ENCODE measurements at regions of chr17 and their contacts with region 1.

Region 1: DNA sequence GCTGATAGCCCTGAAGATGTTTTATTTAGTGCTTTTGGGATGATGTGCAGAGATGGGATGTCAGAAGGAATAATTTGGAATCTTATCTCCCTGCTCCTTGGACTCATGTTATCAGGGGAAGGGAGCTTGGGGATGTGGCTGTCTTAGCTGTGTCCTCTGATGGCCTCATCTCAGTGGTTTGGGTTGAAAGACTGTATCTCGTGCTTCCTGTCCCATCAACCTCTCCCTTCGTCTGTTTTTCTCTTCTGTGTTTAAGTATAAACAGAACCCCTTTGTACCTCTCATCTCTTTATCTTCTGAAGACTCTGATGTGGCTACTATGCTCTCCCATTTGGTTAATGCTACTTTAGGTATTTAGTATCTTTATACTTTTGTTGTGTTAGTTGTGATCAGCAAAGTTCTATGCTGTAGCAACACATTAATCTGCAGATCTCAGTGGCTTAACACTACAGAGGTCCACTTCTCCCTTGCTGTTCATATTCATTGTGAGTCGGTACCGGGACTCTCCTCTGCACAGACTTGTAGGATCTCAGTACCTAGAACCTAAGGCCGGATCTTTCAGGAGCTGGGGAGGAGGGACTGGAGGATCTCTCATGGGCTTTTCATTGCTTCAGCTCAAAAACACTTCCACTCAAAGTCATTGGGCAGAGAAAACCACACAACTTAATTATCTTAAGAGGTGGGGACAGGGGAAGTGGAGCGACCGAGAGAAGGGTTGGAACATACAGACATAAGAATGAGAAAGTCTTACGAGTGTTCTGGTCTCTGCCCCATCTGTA is 28.8 kb downstream of the PRKCA start:
- DNase-seq: no peak
- ATAC-seq: 0 out of 2 replicates have a peak, but pooled peaks have one; percentile 17
- H3K4me3 ChIP-seq: no peak overlapping the region
- H3K27ac ChIP-seq: 0 out of 2 replicates have a peak overlapping the region, but pooled peaks have one; percentile 23
- H3K4me1 ChIP-seq: peaks cover 4% of the 10 kb centered on the region
- H3K27me3 ChIP-seq: no peaks in the 10 kb centered on the region
- CTCF ChIP-seq: no peak

Region 2: GRCh38 chr17:66317629-66318028 is 13.6 kb before region 1 on chr17:
- CTCF ChIA-PET with region 1: no interaction called
- POLR2A ChIA-PET with region 1: no interaction called
- in situ Hi-C with region 1: no loop called
- intact Hi-C with region 1: no loop called
- DNase-seq: no peak
- ATAC-seq: no peak
- H3K4me3 ChIP-seq: no peak overlapping the region
- H3K27ac ChIP-seq: no peak overlapping the region; the same call in 1 of the 2 replicates
- H3K4me1 ChIP-seq: no peaks in the 10 kb centered on the region; the same call in 1 of the 2 replicates
- H3K27me3 ChIP-seq: no peaks in the 10 kb centered on the region
- CTCF ChIP-seq: no peak

Region 3: GRCh38 chr17:66364990-66365490 is 33.8 kb after region 1 on chr17:
- CTCF ChIA-PET with region 1: no interaction called
- POLR2A ChIA-PET with region 1: no interaction called
- in situ Hi-C with region 1: no loop called
- intact Hi-C with region 1: no loop called
- DNase-seq: no peak
- ATAC-seq: no peak
- H3K4me3 ChIP-seq: no peak overlapping the region
- H3K27ac ChIP-seq: peak overlapping the region; percentile 57; the same call in 1 of the 2 replicates
- H3K4me1 ChIP-seq: peaks cover 40% of the 10 kb centered on the region
- H3K27me3 ChIP-seq: no peaks in the 10 kb centered on the region
- CTCF ChIP-seq: no peak

Region 4: GRCh38 chr17:66934009-66934408 is 602.8 kb after region 1 on chr17:
- CTCF ChIA-PET with region 1: interaction called, 11 read pairs
- POLR2A ChIA-PET with region 1: no interaction called
- in situ Hi-C with region 1: no loop called
- intact Hi-C with region 1: no loop called
- DNase-seq: no peak
- ATAC-seq: no peak
- H3K4me3 ChIP-seq: no peak overlapping the region
- H3K27ac ChIP-seq: no peak overlapping the region
- H3K4me1 ChIP-seq: no peaks in the 10 kb centered on the region
- H3K27me3 ChIP-seq: no peaks in the 10 kb centered on the region
- CTCF ChIP-seq: no peak